Motor neuron (in vitro differentiated cells): ENCODE measurements at regions of chr6 and their contacts with region 1.

Region 1: DNA sequence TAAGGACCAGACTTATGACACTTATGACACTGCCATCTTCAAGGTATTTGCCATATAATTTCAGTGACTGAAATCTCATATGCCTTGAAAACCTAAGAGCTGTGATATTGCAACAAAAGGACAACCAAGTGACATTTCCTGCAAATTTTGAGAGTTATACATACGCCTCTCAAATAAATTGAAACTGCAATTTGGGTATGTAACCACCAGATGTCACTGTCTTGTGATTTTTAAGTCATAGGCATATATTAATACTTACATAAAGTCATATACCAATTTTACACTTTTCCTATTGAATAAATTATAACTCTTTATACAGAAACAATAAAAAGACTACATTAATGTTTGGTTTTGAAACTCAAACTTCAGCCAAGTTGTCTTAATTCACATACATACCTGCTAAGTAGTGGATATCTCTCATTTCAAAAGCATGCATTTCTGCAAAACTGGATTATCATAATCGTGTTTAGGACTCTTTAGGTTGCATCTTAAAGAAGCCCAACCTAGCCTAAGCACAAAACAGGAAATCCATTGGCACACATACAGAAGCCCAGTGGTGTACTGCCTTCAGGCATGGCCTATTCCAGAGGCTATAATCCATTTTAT is 180.2 kb downstream of the PACRG start:
- ATAC-seq: no peak
- H3K4me3 ChIP-seq: no peak overlapping the region
- H3K27ac ChIP-seq: no peak overlapping the region
- H3K4me1 ChIP-seq: no peaks in the 10 kb centered on the region

Region 2: DNA sequence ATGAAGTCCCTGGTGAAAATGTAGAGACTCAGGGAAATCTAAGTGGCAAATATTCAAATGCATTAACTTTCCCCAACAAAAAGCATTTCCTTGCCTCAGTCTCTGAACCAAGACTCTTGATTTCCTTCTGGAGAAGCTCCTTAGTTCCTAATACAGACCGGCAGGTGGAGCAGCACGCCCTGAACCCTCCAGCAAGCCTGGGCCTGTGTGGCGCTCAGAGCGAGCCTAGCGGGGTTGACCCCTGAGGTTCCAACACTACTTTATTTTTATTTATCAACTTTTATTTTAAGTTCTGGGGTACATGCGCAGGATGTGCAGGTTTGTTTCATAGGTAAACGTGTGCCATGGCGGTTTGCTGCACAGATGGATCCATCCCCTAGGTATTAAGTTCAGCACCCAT is 129.4 kb before region 1 on chr6:
- in situ Hi-C with region 1: no loop called
- ATAC-seq: no peak
- H3K4me3 ChIP-seq: no peak overlapping the region
- H3K27ac ChIP-seq: no peak overlapping the region
- H3K4me1 ChIP-seq: peaks cover 0 to 9% of the 10 kb centered on the region in 2 donors

Region 3: GRCh38 chr6:163170294-163170883 is 262.4 kb after region 1 on chr6:
- in situ Hi-C with region 1: loop called in 1 of 9 experiments (anchors 25 kb)
- ATAC-seq: no peak
- H3K4me3 ChIP-seq: no peak overlapping the region
- H3K27ac ChIP-seq: no peak overlapping the region
- H3K4me1 ChIP-seq: no peaks in the 10 kb centered on the region